ENCODE measurements at regions of chr14 and their contacts with region 1.

Region 1: DNA sequence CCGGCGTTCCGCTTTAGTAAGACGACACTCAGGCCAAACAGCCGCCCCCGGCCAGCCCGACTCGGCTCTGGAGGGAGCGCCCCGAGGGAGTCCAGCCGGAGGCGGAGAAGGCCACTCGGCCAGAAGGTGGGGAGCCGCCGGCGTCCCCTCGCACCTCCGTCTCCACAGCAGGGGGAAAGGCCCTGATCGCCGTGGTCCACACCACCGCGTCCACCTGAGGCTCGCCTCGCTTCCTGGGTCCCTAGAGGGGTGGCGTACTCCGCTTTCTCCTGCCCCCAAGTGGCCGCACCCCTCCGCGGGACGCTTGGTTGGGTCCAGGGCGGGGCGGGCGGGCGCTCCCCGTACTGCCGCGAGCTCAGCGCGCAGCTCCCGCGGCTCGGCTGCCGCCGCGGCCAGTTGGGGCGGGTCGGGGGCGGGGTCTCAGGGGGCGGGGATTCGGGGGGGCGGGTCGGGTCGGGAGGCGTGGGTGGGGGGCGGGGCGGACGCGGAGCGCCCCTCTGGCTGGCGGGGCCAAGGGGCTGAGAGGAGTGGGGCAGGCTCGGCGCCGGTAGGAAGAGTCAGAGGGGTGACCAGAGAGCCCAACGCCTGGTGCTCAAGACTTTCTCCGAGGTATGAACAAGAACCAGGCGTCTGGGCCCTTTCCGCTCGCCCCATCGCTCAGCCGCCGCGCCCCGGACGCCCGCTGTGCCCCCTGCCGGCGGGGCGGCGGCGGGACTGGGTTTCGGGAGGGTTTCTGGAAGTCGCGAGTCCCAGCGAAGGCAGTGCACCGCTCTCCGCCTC is at the start of gene FRMD6:
- DNase-seq: peak; percentile 83
- H3K4me3 ChIP-seq: peak within 1 kb of the TSS; percentile 89 to 96 (median 93)
- H3K27ac ChIP-seq: peak within 1 kb of the TSS; percentile 96
- H3K4me1 ChIP-seq: peaks cover 43% of the 10 kb centered on the region
- H3K27me3 ChIP-seq: no peaks in the 10 kb centered on the region
- CTCF ChIP-seq: peak; percentile 73 to 75
- POLR2A ChIP-seq: peak; percentile 81
- total RNA-seq, gene FRMD6: 92.2 and 97.1 TPM in 2 replicates

Region 2: GRCh38 chr14:50920482-50921230 is 730.9 kb before region 1 on chr14:
- CTCF ChIA-PET with region 1: no interaction called
- POLR2A ChIA-PET with region 1: no interaction called
- dilution Hi-C with region 1: no loop called
- intact Hi-C with region 1: no loop called
- DNase-seq: no peak
- H3K4me3 ChIP-seq: no peak overlapping the region
- H3K27ac ChIP-seq: no peak overlapping the region
- H3K4me1 ChIP-seq: no peaks in the 10 kb centered on the region
- H3K27me3 ChIP-seq: no peaks in the 10 kb centered on the region
- CTCF ChIP-seq: no peak
- POLR2A ChIP-seq: no peak

Region 3: GRCh38 chr14:51369814-51370213 is 281.8 kb before region 1 on chr14:
- CTCF ChIA-PET with region 1: interaction called, 11 read pairs
- POLR2A ChIA-PET with region 1: no interaction called
- dilution Hi-C with region 1: no loop called
- intact Hi-C with region 1: loop called (anchors 1 kb)
- DNase-seq: peak; percentile 21
- H3K4me3 ChIP-seq: no peak overlapping the region
- H3K27ac ChIP-seq: no peak overlapping the region
- H3K4me1 ChIP-seq: peaks cover 2% of the 10 kb centered on the region
- H3K27me3 ChIP-seq: no peaks in the 10 kb centered on the region
- CTCF ChIP-seq: peak; percentile 28 to 31
- POLR2A ChIP-seq: no peak

Region 4: DNA sequence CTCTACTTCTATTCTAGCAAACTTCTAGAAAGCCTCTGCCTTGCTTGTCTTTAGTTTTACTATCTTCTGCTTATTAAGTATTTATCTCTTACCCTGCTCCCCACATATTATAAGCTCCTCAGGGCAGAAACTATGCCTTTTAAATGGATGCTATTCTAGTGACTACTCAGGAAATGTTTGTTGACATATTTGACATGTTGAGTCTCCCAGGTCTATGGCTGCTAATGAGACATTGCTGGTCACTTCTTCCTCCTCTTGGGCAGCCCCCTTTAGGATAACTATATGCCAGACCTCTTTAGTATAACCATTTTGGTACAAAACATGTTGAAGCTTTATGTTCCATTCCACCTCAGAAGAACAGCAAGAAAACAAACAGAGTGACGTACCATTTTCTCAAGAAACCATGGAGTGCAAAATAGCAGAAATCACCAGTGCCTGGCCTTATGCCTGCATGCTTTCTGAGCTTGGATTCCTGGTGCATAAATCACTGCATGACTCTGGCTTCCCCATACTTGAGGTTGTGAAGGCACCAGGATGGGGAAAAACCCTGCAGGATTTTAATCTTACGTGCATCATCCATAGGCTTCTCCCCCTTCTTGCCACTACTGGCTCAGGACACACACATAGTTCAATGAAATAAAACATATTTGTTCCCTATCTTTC is 208.9 kb before region 1 on chr14:
- CTCF ChIA-PET with region 1: interaction called, 8 read pairs
- POLR2A ChIA-PET with region 1: interaction called, 3 read pairs
- dilution Hi-C with region 1: no loop called
- intact Hi-C with region 1: loop called (anchors 2 kb)
- DNase-seq: peak; percentile 86
- H3K4me3 ChIP-seq: no peak overlapping the region
- H3K27ac ChIP-seq: peak overlapping the region; percentile 92
- H3K4me1 ChIP-seq: peaks cover 37% of the 10 kb centered on the region
- H3K27me3 ChIP-seq: no peaks in the 10 kb centered on the region
- CTCF ChIP-seq: no peak
- POLR2A ChIP-seq: no peak

Region 5: GRCh38 chr14:51554953-51555352 is 96.6 kb before region 1 on chr14:
- CTCF ChIA-PET with region 1: interaction called, 10 read pairs
- POLR2A ChIA-PET with region 1: no interaction called
- dilution Hi-C with region 1: no loop called
- intact Hi-C with region 1: no loop called
- DNase-seq: no peak
- H3K4me3 ChIP-seq: no peak overlapping the region
- H3K27ac ChIP-seq: peak overlapping the region; percentile 59
- H3K4me1 ChIP-seq: peaks cover 20% of the 10 kb centered on the region
- H3K27me3 ChIP-seq: no peaks in the 10 kb centered on the region
- CTCF ChIP-seq: no peak
- POLR2A ChIP-seq: no peak

Region 6: GRCh38 chr14:51726166-51726899 is 74.8 kb after region 1 on chr14:
- CTCF ChIA-PET with region 1: interaction called, 4 read pairs
- POLR2A ChIA-PET with region 1: no interaction called
- dilution Hi-C with region 1: no loop called
- intact Hi-C with region 1: loop called (anchors 2 kb)
- DNase-seq: peak; percentile 41
- H3K4me3 ChIP-seq: no peak overlapping the region
- H3K27ac ChIP-seq: peak overlapping the region; percentile 35
- H3K4me1 ChIP-seq: peaks cover 16% of the 10 kb centered on the region
- H3K27me3 ChIP-seq: no peaks in the 10 kb centered on the region
- CTCF ChIP-seq: no peak
- POLR2A ChIP-seq: no peak